Tibial artery (tissue), 4 donors: ENCODE measurements at regions of chr18 and their contacts with region 1.

Region 1: DNA sequence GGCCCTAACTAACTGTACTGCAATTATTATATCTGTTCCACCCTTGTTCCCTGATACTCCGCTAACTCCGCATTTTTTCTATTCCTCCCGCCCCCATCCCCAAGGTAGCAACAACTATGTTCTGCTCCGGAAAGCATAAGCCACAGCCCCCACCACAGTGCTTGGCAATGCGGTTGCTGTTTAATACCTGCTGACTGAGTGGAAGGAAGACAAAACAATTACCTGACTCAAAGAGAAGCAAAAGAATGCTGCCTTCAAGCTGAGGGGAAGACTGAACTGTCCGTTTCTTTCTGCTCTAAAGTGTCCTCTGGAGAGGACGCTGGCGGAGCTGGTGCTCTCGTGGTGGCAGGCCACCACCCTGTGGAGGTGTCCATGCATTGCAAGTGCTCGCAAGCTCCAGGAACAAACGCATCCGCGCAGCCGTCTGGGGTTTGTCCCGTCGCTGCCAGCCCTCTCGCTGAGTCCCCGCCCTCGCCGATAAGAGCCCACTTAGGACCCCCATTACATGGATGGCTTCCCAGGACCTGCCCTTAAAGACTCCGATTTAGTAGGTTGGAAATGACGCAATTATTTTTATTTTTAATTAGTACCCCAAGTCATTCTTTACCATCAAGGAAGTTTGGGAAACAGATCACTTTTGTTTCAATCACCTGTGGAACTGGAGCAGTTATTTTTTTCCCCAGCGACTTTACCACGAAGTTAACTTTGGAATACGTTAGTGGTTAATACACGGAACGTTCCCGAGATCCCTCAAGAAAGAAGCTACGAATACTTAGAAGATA is 1.6 kb upstream of the MYL12A start:
- DNase-seq: peak; percentile 92 to 94
- H3K4me3 ChIP-seq: peak overlapping the region; percentile 75 to 98
- H3K27ac ChIP-seq: peak overlapping the region; percentile 93 to 98
- H3K4me1 ChIP-seq: peaks cover 0 to 62% (median 6%) of the 10 kb centered on the region in 4 donors
- H3K27me3 ChIP-seq: no peaks in the 10 kb centered on the region
- CTCF ChIP-seq: peak; percentile 94 to 98

Region 2: DNA sequence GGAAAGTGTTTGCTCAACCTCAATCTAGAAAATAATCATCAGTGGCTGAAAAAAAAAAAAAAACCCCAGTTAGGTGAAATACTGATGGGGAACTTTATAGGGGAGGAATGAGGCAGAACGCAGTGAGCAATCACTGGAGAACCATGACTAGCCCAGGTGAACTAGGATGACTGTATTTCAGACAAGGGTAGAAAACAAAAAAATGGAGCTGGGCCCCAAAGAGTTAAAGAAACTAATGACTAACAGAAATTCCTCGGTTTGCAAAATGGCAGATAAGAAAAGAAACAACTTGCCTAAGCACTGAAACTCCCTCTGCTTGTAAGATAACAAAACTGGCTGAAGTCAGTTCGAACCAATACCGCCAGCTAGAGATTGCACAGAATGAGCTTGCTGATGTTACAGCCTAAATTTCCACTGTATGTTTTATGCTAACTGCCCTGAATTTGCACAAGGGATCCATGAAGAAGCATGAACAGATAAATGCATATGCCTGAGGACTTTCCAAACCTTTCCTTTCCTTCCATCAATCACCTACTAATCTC is 920.7 kb before region 1 on chr18:
- intact Hi-C with region 1: no loop called
- DNase-seq: no peak
- H3K4me3 ChIP-seq: no peak overlapping the region
- H3K27ac ChIP-seq: no peak overlapping the region
- H3K4me1 ChIP-seq: no peaks in the 10 kb centered on the region
- H3K27me3 ChIP-seq: peaks cover 0 to 3% of the 10 kb centered on the region in 2 donors
- CTCF ChIP-seq: no peak

Region 3: GRCh38 chr18:2618009-2618408 is 628.0 kb before region 1 on chr18:
- intact Hi-C with region 1: no loop called
- DNase-seq: no peak
- H3K4me3 ChIP-seq: no peak overlapping the region
- H3K27ac ChIP-seq: no peak overlapping the region
- H3K4me1 ChIP-seq: no peaks in the 10 kb centered on the region
- H3K27me3 ChIP-seq: no peaks in the 10 kb centered on the region
- CTCF ChIP-seq: no peak

Region 4: GRCh38 chr18:2994603-2995432 is 251.2 kb before region 1 on chr18:
- intact Hi-C with region 1: loop called (anchors 5 kb)
- DNase-seq: peak in 1 of 2 donors; percentile 76
- H3K4me3 ChIP-seq: no peak overlapping the region
- H3K27ac ChIP-seq: peak overlapping the region; percentile 80 to 87
- H3K4me1 ChIP-seq: peaks cover 7 to 74% (median 39%) of the 10 kb centered on the region in 4 donors
- H3K27me3 ChIP-seq: no peaks in the 10 kb centered on the region
- CTCF ChIP-seq: peak; percentile 28 to 59

Region 5: GRCh38 chr18:3012964-3013804 is 232.9 kb before region 1 on chr18 and contains the start of gene LPIN2:
- intact Hi-C with region 1: loop called (anchors 5 kb)
- DNase-seq: peak; percentile 99 to 100
- H3K4me3 ChIP-seq: peak within 1 kb of the TSS; percentile 95 to 96
- H3K27ac ChIP-seq: peak within 1 kb of the TSS; percentile 92 to 99
- H3K4me1 ChIP-seq: peaks cover 0 to 73% (median 35%) of the 10 kb centered on the region in 4 donors
- H3K27me3 ChIP-seq: no peaks in the 10 kb centered on the region
- CTCF ChIP-seq: no peak

Region 6: DNA sequence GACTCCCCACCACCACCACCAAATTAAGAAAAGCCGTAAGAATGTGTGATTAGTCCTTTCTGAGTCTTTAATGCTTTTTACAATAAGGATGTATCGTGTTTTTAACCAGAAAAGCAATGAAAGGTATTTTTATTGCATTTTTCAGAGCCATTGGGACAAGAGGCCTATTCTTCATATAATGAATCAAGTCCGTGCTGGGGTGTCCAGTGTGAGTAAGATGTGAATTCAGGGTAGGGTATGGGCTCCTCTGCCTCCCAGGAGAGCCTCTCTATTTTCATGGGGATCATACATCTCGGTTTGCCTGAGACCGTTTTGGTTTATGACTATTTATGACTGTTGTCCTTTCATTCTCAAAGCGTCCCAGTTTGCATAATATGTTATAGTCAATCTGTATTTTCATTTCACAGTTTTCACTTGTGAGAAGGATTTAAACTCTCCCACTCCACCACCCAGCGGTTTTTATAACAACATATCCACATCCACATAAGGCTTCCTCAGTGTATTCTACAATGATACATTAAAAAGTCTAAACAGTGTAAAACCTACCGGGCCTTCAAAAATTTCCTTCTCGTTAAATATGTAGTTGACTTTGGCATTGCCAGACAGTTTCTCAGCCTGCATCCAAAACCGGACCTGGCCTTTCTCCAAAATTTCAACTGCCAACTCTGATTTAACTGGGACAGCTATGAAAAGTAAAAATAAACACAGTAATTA is 152.3 kb before region 1 on chr18:
- intact Hi-C with region 1: loop called (anchors 10 kb)
- DNase-seq: no peak
- H3K4me3 ChIP-seq: no peak overlapping the region
- H3K27ac ChIP-seq: peak overlapping the region; percentile 47 to 67
- H3K4me1 ChIP-seq: peaks cover 0 to 48% (median 22%) of the 10 kb centered on the region in 4 donors
- H3K27me3 ChIP-seq: no peaks in the 10 kb centered on the region
- CTCF ChIP-seq: no peak

Region 7: DNA sequence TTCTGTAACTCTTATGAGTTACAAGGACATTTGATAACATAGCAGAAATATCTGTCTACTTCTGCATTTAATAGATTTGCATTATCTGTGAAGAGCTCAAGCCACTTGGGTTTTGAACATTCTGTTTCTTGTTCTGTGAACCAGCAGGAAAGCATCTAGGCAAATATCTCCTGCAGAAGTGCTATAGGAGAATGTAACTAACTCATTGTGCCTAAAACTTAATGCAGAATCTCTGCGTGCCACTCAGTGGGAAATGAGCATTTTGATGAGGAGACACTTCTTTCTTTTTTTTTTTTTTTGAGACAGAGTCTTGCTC is 89.8 kb before region 1 on chr18:
- intact Hi-C with region 1: loop called (anchors 5 kb)
- DNase-seq: no peak
- H3K4me3 ChIP-seq: peak overlapping the region in 1 of 2 donors; percentile 21
- H3K27ac ChIP-seq: peak overlapping the region; percentile 89 to 90
- H3K4me1 ChIP-seq: peaks cover 3 to 59% (median 18%) of the 10 kb centered on the region in 4 donors
- H3K27me3 ChIP-seq: no peaks in the 10 kb centered on the region
- CTCF ChIP-seq: no peak